ENCODE measurements at regions of chr4 and their contacts with region 1.

Region 1: DNA sequence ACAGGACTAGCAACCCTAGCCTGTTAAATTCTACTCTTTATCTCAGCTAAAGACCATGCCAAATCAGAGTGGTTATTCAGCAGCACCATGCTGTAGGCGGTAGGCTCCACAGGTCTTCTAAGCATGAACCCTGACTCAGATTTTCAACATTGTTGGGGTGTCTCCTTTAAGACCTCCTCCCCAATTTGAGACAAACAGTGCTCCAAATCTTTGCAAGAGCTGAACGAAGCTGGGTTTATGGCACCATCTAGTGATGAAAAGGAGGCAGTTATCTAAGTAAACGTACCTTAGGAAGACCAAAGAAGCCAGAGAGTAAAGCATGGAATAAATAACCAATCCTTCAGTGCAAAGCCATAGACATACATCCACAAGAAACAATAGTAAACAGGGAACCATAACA is 334.5 kb upstream of the SLC7A11 start:
- DNase-seq: peak; percentile 64
- ATAC-seq: peak; percentile 89
- H3K4me3 ChIP-seq: no peak overlapping the region
- H3K27ac ChIP-seq: no peak overlapping the region
- H3K4me1 ChIP-seq: no peaks in the 10 kb centered on the region
- H3K27me3 ChIP-seq: no peaks in the 10 kb centered on the region
- CTCF ChIP-seq: peak; percentile 56 to 81 (median 62); a peak in 5 of 6 replicates
- POLR2A ChIP-seq: no peak
- RAD21 ChIP-seq: peak; percentile 88

Region 2: GRCh38 chr4:138182838-138183426 is 393.8 kb before region 1 on chr4:
- CTCF ChIA-PET with region 1: no interaction called
- POLR2A ChIA-PET with region 1: no interaction called
- RAD21 ChIA-PET with region 1: no interaction called
- intact Hi-C with region 1: loop called (anchors 10 kb)
- DNase-seq: peak; percentile 45
- ATAC-seq: no peak
- H3K4me3 ChIP-seq: no peak overlapping the region
- H3K27ac ChIP-seq: no peak overlapping the region
- H3K4me1 ChIP-seq: no peaks in the 10 kb centered on the region
- H3K27me3 ChIP-seq: no peaks in the 10 kb centered on the region
- CTCF ChIP-seq: peak; percentile 45 to 81 (median 59)
- POLR2A ChIP-seq: no peak
- RAD21 ChIP-seq: peak; percentile 73

Region 3: DNA sequence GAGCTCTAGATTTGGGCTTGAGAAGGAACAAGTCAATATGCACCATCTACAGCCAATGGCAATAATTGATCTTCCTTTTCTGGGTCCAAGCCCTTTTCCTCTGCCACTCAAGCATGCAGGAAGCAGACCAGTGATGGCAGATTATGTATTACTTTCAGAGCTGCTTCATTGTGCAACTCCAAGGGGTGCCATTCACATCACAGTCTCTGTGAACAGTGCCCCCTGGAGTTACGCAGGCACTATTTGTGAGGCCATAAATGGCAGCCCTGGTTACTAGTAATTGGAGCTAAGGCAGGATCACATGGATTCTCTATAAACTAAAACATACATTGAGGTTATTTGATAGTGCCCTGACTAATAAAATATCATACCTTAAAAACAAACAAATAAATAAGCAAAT is 21.1 kb before region 1 on chr4:
- CTCF ChIA-PET with region 1: interaction called, 12 read pairs
- POLR2A ChIA-PET with region 1: no interaction called
- RAD21 ChIA-PET with region 1: no interaction called
- intact Hi-C with region 1: no loop called
- DNase-seq: no peak
- ATAC-seq: peak; percentile 62
- H3K4me3 ChIP-seq: no peak overlapping the region
- H3K27ac ChIP-seq: no peak overlapping the region
- H3K4me1 ChIP-seq: 0 out of 4 replicates have a peak, but pooled peaks cover 0 to 4% of the 10 kb centered on the region in 2 experiments
- H3K27me3 ChIP-seq: no peaks in the 10 kb centered on the region
- CTCF ChIP-seq: peak; percentile 48 to 54 (median 52); a peak in 4 of 6 replicates
- POLR2A ChIP-seq: no peak
- RAD21 ChIP-seq: peak; percentile 50

Region 4: GRCh38 chr4:138680989-138681604 is 104.4 kb after region 1 on chr4:
- CTCF ChIA-PET with region 1: interaction called, 14 read pairs
- POLR2A ChIA-PET with region 1: no interaction called
- RAD21 ChIA-PET with region 1: interaction called, 3 to 5 read pairs
- intact Hi-C with region 1: loop called (anchors 5 kb)
- DNase-seq: peak; percentile 57
- ATAC-seq: peak; percentile 84
- H3K4me3 ChIP-seq: no peak overlapping the region
- H3K27ac ChIP-seq: no peak overlapping the region
- H3K4me1 ChIP-seq: no peaks in the 10 kb centered on the region
- H3K27me3 ChIP-seq: no peaks in the 10 kb centered on the region
- CTCF ChIP-seq: peak; percentile 72 to 96 (median 74); a peak in 5 of 6 replicates
- POLR2A ChIP-seq: no peak
- RAD21 ChIP-seq: peak; percentile 91

Region 5: GRCh38 chr4:138870737-138871554 is 294.3 kb after region 1 on chr4:
- CTCF ChIA-PET with region 1: interaction called, 29 read pairs
- POLR2A ChIA-PET with region 1: no interaction called
- RAD21 ChIA-PET with region 1: no interaction called
- intact Hi-C with region 1: loop called (anchors 5 kb)
- DNase-seq: peak; percentile 65
- ATAC-seq: peak; percentile 82
- H3K4me3 ChIP-seq: no peak overlapping the region
- H3K27ac ChIP-seq: no peak overlapping the region
- H3K4me1 ChIP-seq: peaks cover 0 to 9% of the 10 kb centered on the region in 2 experiments; a peak in 1 of 4 replicates
- H3K27me3 ChIP-seq: peaks cover 6% of the 10 kb centered on the region; the same call in 1 of the 2 replicates
- CTCF ChIP-seq: peak; percentile 71 to 87 (median 81)
- POLR2A ChIP-seq: no peak
- RAD21 ChIP-seq: peak; percentile 94

Region 6: DNA sequence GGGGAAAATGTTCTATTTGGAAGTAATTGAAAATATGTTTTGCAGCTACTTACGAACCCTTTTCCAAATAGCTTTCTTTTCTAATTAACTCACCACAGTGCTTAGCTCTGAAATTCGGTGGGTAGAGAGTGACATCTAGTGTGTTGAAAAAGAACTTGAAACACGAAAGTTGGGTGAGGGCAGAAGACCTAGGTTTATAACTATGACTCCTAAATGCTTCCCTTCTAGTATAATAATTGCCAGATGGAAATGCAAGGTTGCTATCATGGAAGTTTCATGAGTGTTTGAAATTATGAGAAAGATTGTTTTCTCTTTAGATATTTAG is 361.6 kb after region 1 on chr4:
- CTCF ChIA-PET with region 1: interaction called, 15 read pairs
- POLR2A ChIA-PET with region 1: no interaction called
- RAD21 ChIA-PET with region 1: no interaction called
- intact Hi-C with region 1: loop called (anchors 5 kb)
- DNase-seq: peak; percentile 27
- ATAC-seq: peak; percentile 90
- H3K4me3 ChIP-seq: no peak overlapping the region
- H3K27ac ChIP-seq: no peak overlapping the region
- H3K4me1 ChIP-seq: no peaks in the 10 kb centered on the region
- H3K27me3 ChIP-seq: no peaks in the 10 kb centered on the region
- CTCF ChIP-seq: peak; percentile 34 to 55 (median 39); a peak in 4 of 6 replicates
- POLR2A ChIP-seq: no peak
- RAD21 ChIP-seq: peak; percentile 75

Measured in HCT116 (cell line).